GM10248 (cell line): ENCODE measurements at regions of chr3 and their contacts with region 1.

Region 1: GRCh38 chr3:56988458-56989168 is 71.9 kb upstream of the SPATA12 start:
- DNase-seq: peak; percentile 66
- CTCF ChIP-seq: peak; percentile 62

Region 2: GRCh38 chr3:56702490-56703315 is 285.9 kb before region 1 on chr3:
- CTCF ChIA-PET with region 1: interaction called, 141 read pairs
- POLR2A ChIA-PET with region 1: no interaction called
- DNase-seq: peak; percentile 61
- CTCF ChIP-seq: peak; percentile 67

Region 3: DNA sequence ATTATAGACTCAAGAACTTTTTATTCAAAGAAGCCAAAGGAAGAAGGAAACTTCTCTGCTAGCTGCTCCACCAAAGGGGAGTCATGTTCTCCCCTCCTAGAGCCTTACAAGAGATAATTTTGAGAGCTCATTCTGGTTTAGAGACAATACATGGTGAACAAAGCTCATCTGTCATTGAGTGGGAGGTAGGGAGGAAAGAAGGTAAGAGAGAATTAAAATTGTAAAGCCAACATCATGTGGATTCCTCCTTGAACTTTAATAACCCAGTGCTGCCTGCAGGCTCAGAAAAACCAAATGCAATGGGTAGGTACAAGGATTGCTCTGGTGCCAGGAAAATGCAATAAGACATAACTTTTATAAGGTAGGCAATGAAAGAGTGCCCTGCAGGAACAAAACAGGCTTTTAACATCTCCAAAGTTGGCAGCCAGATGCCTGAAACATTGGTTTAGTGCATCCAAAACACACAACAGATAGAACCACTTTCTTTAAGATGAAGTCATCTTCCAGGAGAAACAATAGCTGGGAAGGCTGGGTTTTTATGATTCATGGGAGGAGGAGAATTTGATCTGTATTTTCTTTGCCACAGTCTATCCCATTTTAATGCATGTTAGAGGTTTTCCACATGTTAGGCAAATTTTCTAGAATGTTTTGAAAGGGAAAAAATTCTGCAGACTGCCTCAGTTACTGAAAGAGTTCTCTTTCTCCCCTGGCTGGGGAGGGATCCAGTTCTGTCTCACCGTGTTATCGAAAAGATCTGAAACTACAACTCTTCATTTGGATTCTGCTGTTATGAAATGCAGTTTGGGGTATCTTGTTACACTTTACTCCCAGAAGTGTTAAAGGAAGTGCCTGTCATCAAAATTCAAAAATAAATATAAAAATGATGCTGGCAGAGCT is 175.6 kb before region 1 on chr3:
- CTCF ChIA-PET with region 1: interaction called, 111 read pairs
- POLR2A ChIA-PET with region 1: no interaction called
- DNase-seq: no peak
- CTCF ChIP-seq: no peak

Region 4: DNA sequence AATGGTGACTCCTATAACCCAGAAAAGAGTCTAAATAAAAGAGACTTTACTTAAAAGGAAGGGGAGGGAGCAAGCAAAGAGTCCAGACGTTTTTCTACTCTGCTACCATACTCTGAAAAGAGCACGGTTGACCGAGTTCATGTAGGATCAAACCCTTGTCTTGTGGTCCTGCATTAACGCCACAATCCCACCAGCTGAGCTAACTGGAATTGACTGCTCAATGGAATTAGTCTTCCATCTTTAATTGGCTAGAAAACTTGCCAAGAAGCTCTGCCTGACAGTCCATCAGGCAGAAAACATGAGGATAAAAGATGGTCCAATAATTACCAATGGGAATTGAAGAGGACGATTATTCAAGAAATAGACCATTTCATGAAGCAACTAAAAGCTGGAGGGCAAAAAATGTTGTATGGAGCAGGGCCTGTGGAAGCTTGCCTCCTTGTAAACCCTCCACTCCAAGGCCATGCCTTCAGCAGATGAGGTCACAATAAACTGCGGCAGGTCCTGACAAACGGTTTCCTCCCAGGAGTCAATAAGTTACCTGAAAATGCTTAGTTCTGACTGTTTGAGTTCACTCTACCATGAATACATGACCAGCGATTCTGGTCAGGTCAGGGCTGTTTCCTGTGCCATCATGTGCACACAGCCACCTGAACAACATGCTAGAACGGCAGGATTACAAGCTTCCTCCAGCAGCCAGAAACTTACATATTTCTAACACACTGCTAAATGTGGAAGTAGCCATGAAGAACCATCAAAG is 151.2 kb before region 1 on chr3:
- CTCF ChIA-PET with region 1: interaction called, 13 read pairs
- POLR2A ChIA-PET with region 1: no interaction called
- DNase-seq: peak; percentile 15
- CTCF ChIP-seq: no peak

Region 5: GRCh38 chr3:56970461-56970879 is 18.1 kb before region 1 on chr3:
- CTCF ChIA-PET with region 1: interaction called, 20 read pairs
- POLR2A ChIA-PET with region 1: no interaction called
- DNase-seq: peak; percentile 55
- CTCF ChIP-seq: no peak